Posterior vena cava (tissue), 2 donors: ENCODE measurements at regions of chr1 and their contacts with region 1.

Region 1: DNA sequence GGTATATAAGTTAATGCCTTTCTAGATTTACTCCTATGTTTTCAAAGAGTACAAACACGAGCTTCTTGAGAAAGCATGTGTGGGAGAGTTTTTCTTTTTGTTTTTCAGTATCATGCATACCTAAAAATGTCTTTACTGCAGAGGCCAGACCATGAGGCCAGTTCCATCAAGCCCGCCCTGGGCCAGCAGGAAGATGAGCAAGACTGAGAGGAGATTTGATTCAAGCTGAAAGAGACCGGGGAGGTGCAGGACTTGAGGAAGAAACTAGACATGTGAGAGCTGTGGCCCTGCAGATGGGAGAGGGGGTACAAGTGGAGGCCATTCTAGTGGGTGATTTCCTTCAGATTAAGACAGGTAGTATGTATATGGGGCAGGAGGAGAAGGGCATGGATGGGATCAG is 33.4 kb upstream of the NTPCR start:
- DNase-seq: no peak

Region 2: GRCh38 chr1:232542638-232543593 is 374.1 kb before region 1 on chr1:
- intact Hi-C with region 1: loop called in 1 of 2 experiments (anchors 10 kb)
- DNase-seq: no peak

Region 3: GRCh38 chr1:233005703-233006102 is 88.7 kb after region 1 on chr1:
- intact Hi-C with region 1: no loop called
- DNase-seq: no peak